CD14-positive monocyte (primary cell): ENCODE measurements at regions of chr12 and their contacts with region 1.

Region 1: DNA sequence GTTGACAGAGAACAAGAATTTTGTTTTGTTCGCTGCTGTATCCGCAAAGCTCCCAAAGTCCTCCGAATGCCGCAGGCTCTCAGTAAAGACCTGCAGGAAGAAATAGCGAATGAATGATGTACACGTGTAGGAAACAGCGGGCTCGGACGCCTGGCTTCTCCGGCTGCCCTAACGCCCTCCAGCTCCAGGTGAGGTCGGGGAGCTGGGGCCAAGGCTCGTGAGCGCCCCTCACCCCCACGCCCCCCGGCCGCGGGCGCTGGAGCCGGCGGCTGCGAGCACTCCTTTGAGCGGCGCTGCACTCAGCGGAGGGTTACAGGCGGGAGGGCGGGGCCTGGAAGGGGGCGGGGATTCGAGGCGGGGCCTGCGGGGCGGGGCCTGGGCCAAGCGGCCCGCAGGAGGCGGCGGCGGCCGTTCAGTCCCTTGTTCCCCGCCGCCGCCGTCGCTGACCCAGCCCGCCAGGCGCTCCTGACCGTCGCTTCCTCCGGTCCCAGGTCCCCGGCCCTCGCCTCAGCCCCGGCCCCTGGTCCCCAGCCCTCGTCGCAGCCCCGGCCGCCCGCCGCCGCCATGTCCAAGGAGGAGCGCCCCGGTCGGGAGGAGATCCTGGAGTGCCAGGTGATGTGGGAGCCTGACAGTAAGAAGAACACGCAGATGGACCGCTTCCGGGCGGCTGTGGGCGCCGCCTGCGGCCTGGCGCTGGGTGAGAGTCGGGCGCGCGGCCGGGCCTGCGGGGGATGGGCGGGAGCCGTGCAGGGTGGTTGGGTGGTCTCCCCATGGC is at the start of gene AACS:
- DNase-seq: peak; percentile 57 to 68 (median 65)
- H3K4me3 ChIP-seq: peak within 1 kb of the TSS; percentile 44 to 83 (median 62)
- H3K4me3 Mint-ChIP-seq: peak within 1 kb of the TSS; percentile 78 to 91
- H3K27ac ChIP-seq: no peak within 1 kb of the TSS
- H3K27ac Mint-ChIP-seq: peak within 1 kb of the TSS in 3 of 7 donors; percentile 28 to 70 (median 53)
- H3K4me1 ChIP-seq: peaks cover 12 to 18% of the 10 kb centered on the region in 2 donors
- H3K4me1 Mint-ChIP-seq: peaks cover 21% of the 10 kb centered on the region
- H3K27me3 ChIP-seq: peaks cover 3 to 11% of the 10 kb centered on the region in 2 donors
- H3K27me3 Mint-ChIP-seq: peaks cover 16 to 20% (median 17%) of the 10 kb centered on the region in 3 donors
- CTCF ChIP-seq: no peak
- polyA plus RNA-seq, gene AACS: 4.7 to 7.9 (median 5.1) TPM

Region 2: DNA sequence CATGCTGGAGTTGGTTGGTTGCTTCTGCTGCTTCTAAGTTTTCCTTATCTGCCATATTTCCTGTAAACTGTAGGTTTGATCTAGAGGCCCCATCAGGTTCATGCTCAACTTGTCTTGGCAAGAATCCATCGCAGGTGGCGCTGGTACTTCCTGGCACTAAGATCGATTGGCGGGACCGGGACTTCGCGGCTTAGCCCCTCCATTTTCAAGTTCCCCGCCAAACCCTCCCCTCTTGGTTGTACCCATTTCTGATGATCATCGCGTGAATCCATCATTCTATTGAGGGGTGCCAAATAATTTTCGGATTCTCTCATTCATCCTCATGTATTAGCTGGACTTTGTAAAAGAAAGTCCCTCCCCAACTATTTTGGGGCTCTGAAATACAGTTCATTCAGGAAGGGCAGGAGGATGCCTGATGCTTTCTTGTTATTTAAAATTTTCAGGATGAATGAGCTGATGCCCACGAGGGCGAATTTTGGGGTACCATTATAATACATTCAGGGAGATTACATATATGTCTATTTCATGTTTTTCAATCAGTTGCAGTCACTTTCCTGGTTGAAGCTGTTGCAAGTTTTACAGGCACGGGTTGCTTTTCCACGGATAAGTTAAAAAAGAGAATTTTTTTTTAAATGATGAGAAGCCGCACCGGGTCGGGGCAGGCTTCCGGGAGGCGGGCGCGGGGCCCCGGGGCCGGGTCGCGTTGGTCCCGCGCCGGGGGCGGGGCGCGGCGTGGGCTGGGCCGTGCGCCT is 72.2 kb before region 1 on chr12:
- intact Hi-C with region 1: loop called (anchors 5 kb)
- DNase-seq: peak; percentile 24 to 55 (median 40)
- H3K4me3 ChIP-seq: peak overlapping the region; percentile 59 to 93 (median 81)
- H3K4me3 Mint-ChIP-seq: peak overlapping the region; percentile 85 to 86
- H3K27ac ChIP-seq: peak overlapping the region in 1 of 2 donors; percentile 45
- H3K27ac Mint-ChIP-seq: peak overlapping the region in 6 of 7 donors; percentile 31 to 59 (median 40)
- H3K4me1 ChIP-seq: peaks cover 47 to 52% of the 10 kb centered on the region in 2 donors
- H3K4me1 Mint-ChIP-seq: peaks cover 48% of the 10 kb centered on the region
- H3K27me3 ChIP-seq: no peaks in the 10 kb centered on the region
- H3K27me3 Mint-ChIP-seq: peaks cover 0 to 2% (median 0%) of the 10 kb centered on the region in 3 donors
- CTCF ChIP-seq: peak; percentile 49

Region 3: DNA sequence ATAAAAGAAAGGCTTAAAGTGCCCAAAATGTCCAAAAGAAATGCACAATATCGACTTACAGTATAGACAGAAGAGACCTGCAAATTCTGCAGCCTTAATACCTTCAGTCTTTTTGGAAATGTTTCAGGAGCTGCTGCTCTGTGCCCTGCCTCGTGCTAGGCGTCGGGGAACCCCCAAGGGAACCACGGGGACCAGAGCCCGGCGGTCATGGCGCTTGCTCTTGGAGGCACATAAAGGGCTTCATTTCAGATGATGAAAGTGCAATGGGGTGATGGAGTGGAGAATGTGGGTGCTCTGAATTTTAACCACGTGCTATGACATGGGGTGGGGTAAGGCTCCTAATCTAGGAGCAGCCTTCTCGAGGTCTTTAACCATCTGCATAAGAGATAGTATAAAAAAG is 14.8 kb before region 1 on chr12:
- intact Hi-C with region 1: loop called (anchors 1 to 2 kb)
- DNase-seq: no peak
- H3K4me3 ChIP-seq: no peak overlapping the region
- H3K4me3 Mint-ChIP-seq: peak overlapping the region; percentile 35 to 37
- H3K27ac ChIP-seq: no peak overlapping the region
- H3K27ac Mint-ChIP-seq: peak overlapping the region in 1 of 7 donors; percentile 64
- H3K4me1 ChIP-seq: peaks cover 10 to 12% of the 10 kb centered on the region in 2 donors
- H3K4me1 Mint-ChIP-seq: peaks cover 5% of the 10 kb centered on the region
- H3K27me3 ChIP-seq: no peaks in the 10 kb centered on the region
- H3K27me3 Mint-ChIP-seq: peaks cover 3% of the 10 kb centered on the region in 3 donors
- CTCF ChIP-seq: no peak